MCF 10A (cell line): ENCODE measurements at regions of chr2 and their contacts with region 1.

Region 1: GRCh38 chr2:152497481-152498052 is 162.6 kb downstream of the FMNL2 start:
- DNase-seq: peak; percentile 68
- H3K4me3 Mint-ChIP-seq: peak overlapping the region; percentile 52
- H3K27ac Mint-ChIP-seq: peak overlapping the region; percentile 52
- H3K4me1 Mint-ChIP-seq: peaks cover 53% of the 10 kb centered on the region
- H3K27me3 Mint-ChIP-seq: no peaks in the 10 kb centered on the region
- CTCF ChIP-seq: no peak

Region 2: GRCh38 chr2:152477347-152478092 is 20.0 kb before region 1 on chr2:
- CTCF ChIA-PET with region 1: interaction called, 5 read pairs
- POLR2A ChIA-PET with region 1: interaction called, 38 read pairs
- intact Hi-C with region 1: no loop called
- DNase-seq: peak; percentile 65
- H3K4me3 Mint-ChIP-seq: no peak overlapping the region
- H3K27ac Mint-ChIP-seq: peak overlapping the region; percentile 35
- H3K4me1 Mint-ChIP-seq: peaks cover 17% of the 10 kb centered on the region
- H3K27me3 Mint-ChIP-seq: no peaks in the 10 kb centered on the region
- CTCF ChIP-seq: no peak

Region 3: DNA sequence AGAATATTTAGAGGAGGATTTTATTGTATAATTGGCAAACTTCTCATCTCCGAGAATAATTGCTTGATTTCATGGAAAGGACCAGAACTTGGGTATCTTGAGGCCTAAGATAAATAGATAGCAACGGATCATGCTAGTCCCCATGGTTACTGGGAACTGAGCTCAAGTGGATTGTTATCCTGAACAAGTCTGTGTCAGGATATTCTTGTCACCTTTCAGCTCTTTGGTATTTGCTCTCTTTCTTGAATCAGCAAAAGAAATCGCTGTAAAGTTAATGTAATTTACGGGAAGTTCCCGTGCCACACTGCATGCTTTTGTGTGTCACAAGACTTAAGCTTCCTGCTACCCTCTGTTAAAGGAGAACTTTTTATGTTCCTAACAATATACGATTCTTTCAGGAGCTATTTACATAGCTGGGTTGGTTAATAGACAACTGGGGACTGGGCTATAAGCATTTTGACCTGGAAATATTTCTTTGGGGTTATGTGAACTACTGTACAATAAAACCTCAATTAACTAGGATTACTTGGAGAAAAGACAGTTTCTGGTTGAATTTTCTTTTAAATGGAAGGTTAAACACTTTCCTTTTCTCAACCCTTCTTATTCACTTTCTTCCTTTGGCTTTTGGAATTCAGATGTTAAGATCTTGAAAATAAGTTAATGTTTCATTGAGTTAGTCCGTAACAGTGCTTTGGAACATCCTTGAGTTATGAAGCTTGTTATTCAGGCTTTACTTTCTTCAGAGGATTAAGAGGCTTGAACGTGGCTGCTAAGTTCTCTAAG is 11.4 kb before region 1 on chr2:
- CTCF ChIA-PET with region 1: interaction called, 11 read pairs
- POLR2A ChIA-PET with region 1: interaction called, 6 read pairs
- intact Hi-C with region 1: no loop called
- DNase-seq: no peak
- H3K4me3 Mint-ChIP-seq: no peak overlapping the region
- H3K27ac Mint-ChIP-seq: no peak overlapping the region
- H3K4me1 Mint-ChIP-seq: peaks cover 6% of the 10 kb centered on the region
- H3K27me3 Mint-ChIP-seq: no peaks in the 10 kb centered on the region
- CTCF ChIP-seq: no peak

Region 4: DNA sequence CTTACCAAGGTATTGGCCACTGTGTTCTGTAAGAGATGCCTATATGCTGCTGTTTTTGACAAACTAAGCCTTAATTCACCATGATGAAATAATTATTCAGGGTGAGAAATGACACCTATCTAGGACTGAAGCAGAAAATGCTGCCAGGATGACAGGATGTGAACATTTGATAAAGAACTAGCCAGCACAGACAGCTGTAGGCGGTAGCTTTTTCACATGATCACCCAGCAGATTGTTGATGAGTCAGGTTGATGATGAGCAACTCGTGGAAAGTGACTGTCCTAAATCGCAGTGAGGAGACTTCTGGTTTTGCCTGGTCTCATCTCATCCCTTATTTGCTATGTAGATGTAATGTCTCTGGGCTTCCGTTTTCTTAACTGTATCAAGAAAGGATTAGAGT is 75.6 kb after region 1 on chr2:
- CTCF ChIA-PET with region 1: interaction called, 3 read pairs
- POLR2A ChIA-PET with region 1: interaction called, 16 read pairs
- intact Hi-C with region 1: no loop called
- DNase-seq: peak; percentile 69
- H3K4me3 Mint-ChIP-seq: no peak overlapping the region
- H3K27ac Mint-ChIP-seq: peak overlapping the region; percentile 37
- H3K4me1 Mint-ChIP-seq: peaks cover 16% of the 10 kb centered on the region
- H3K27me3 Mint-ChIP-seq: no peaks in the 10 kb centered on the region
- CTCF ChIP-seq: no peak